ENCODE measurements at regions of chr12 and their contacts with region 1.

Region 1: GRCh38 chr12:75722714-75723200 is 211.3 kb upstream of the KRR1 start:
- DNase-seq: peak; percentile 29 to 62 (median 36)
- H3K4me3 ChIP-seq: no peak overlapping the region
- H3K4me3 Mint-ChIP-seq: peak overlapping the region in 4 of 8 donors; percentile 1 to 75 (median 57)
- H3K27ac ChIP-seq: no peak overlapping the region
- H3K27ac Mint-ChIP-seq: peak overlapping the region; percentile 27 to 89 (median 76)
- H3K4me1 ChIP-seq: peaks cover 18% of the 10 kb centered on the region
- H3K4me1 Mint-ChIP-seq: peaks cover 14 to 32% (median 20%) of the 10 kb centered on the region in 4 donors
- H3K27me3 ChIP-seq: no peaks in the 10 kb centered on the region
- H3K27me3 Mint-ChIP-seq: no peaks in the 10 kb centered on the region

Region 2: DNA sequence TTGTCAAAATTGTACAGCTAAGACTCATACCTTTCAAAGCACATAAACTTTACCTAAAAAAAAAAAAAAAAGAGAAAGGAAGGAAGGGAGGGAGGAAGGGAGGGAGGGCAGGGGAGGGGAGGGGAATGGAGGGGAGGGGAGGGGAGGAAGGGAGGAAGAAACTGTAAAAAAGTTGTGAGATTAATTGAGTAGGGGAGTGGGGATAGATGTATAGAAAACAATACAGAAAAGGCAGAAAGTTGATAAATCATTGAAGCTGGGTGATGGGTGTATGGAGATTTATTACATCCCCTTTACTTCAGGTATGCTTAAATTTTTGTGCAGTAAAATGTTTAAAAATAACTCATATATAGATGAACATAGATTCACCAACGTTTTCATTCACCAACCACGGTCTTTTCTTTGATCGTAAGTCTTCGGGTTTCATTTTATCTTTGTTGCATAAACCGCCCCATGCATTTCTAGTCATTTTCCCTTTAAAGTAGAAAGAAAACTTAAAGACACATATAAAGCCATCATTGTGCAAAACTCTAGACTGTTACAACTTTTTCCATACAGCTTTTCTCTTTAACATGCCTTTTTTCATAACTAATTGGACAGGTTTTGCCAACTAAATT is 20.2 kb before region 1 on chr12:
- CTCF ChIA-PET with region 1: interaction called, 3 read pairs
- POLR2A ChIA-PET with region 1: no interaction called
- intact Hi-C with region 1: loop called (anchors 2 kb)
- DNase-seq: peak in 3 of 5 donors; percentile 4 to 25 (median 19)
- H3K4me3 ChIP-seq: no peak overlapping the region
- H3K4me3 Mint-ChIP-seq: peak overlapping the region; percentile 33 to 81 (median 70)
- H3K27ac ChIP-seq: no peak overlapping the region
- H3K27ac Mint-ChIP-seq: peak overlapping the region in 6 of 7 donors; percentile 41 to 75 (median 68)
- H3K4me1 ChIP-seq: peaks cover 19% of the 10 kb centered on the region
- H3K4me1 Mint-ChIP-seq: peaks cover 14 to 18% (median 17%) of the 10 kb centered on the region in 4 donors
- H3K27me3 ChIP-seq: no peaks in the 10 kb centered on the region
- H3K27me3 Mint-ChIP-seq: no peaks in the 10 kb centered on the region

Measured in CD4-positive, alpha-beta memory T cell (primary cell).